ENCODE measurements at regions of chr14 and their contacts with region 1.

Region 1: GRCh38 chr14:24710403-24711112 is 76.6 kb upstream of the GZMB start:
- DNase-seq: peak; percentile 76
- ATAC-seq: peak; percentile 84
- H3K4me3 Mint-ChIP-seq: no peak overlapping the region
- H3K27ac Mint-ChIP-seq: no peak overlapping the region
- H3K4me1 Mint-ChIP-seq: peaks cover 2% of the 10 kb centered on the region
- H3K27me3 Mint-ChIP-seq: peaks cover 2% of the 10 kb centered on the region
- CTCF ChIP-seq: peak; percentile 80

Region 2: DNA sequence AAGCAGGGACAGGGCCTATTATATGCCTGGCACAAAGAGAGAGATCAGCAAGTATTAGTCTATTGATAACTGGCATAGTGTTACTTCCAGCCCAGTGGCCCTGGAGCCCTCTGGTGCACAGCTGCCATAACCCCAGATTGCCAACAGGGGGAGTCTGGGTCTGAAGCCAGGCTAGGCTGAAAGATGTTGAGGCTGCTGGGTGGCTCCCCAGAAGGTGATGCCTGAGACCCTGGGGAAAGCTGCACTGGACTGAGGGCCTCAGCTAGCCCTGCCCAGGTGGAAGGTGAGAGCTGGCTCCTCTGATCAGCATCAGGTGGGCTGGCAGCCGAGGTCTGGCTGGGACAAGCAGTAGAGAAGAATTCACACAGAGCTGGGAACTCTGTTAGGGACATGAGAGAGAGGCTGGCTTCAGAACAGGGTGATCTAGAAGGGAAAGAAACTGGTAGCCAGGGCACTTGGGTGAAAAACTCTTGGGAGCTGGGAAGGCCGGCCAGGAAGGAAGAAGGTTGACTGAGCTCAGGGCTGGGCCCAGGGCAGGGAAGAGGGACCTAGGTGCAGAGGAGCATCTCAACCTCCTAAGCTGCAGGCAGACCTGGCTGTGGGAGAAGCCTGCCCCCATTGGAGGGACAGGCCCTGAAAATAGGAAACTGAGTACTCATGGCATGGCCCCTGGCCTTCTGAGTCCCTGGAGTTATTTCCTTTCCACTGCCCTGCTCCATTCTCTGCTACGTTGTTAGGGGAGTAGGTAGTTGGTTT is 104.9 kb before region 1 on chr14:
- CTCF ChIA-PET with region 1: interaction called, 23 read pairs
- POLR2A ChIA-PET with region 1: interaction called, 3 read pairs
- intact Hi-C with region 1: no loop called
- DNase-seq: peak; percentile 86
- ATAC-seq: peak; percentile 85
- H3K4me3 Mint-ChIP-seq: peak overlapping the region; percentile 72
- H3K27ac Mint-ChIP-seq: peak overlapping the region; percentile 87
- H3K4me1 Mint-ChIP-seq: peaks cover 55% of the 10 kb centered on the region
- H3K27me3 Mint-ChIP-seq: no peaks in the 10 kb centered on the region
- CTCF ChIP-seq: peak; percentile 98

Region 3: DNA sequence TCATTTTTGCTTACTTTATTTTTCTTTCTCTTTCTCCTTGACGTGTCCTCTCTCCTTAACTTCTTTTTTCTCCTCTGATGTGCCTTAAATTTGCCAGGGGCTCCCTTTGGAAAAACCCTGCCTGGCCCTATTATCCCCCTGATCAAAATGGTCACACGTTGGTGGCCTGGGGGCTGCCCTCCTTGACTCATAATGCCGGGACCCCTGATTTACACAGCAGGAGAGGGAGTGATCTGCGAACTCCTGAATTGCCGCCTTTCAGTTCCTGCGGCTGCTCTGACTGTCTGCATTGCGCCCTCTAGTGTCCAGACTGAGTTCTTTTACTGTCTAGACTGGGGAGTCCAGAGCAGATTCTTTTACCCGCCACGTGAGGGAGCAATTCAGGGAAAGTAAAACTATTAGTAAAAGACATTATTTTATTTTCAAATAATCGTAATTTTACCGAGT is 31.7 kb before region 1 on chr14:
- CTCF ChIA-PET with region 1: interaction called, 36 read pairs
- POLR2A ChIA-PET with region 1: interaction called, 3 read pairs
- intact Hi-C with region 1: no loop called
- DNase-seq: peak; percentile 85
- ATAC-seq: peak; percentile 42
- H3K4me3 Mint-ChIP-seq: peak overlapping the region; percentile 81
- H3K27ac Mint-ChIP-seq: peak overlapping the region; percentile 96
- H3K4me1 Mint-ChIP-seq: peaks cover 64% of the 10 kb centered on the region
- H3K27me3 Mint-ChIP-seq: no peaks in the 10 kb centered on the region
- CTCF ChIP-seq: peak; percentile 99

Region 4: GRCh38 chr14:24699052-24699451 is 11.5 kb before region 1 on chr14:
- CTCF ChIA-PET with region 1: interaction called, 28 read pairs
- POLR2A ChIA-PET with region 1: interaction called, 5 read pairs
- intact Hi-C with region 1: no loop called
- DNase-seq: no peak
- ATAC-seq: no peak
- H3K4me3 Mint-ChIP-seq: no peak overlapping the region
- H3K27ac Mint-ChIP-seq: peak overlapping the region; percentile 0
- H3K4me1 Mint-ChIP-seq: peaks cover 9% of the 10 kb centered on the region
- H3K27me3 Mint-ChIP-seq: no peaks in the 10 kb centered on the region
- CTCF ChIP-seq: no peak

Region 5: GRCh38 chr14:24734878-24735500 is 24.4 kb after region 1 on chr14:
- CTCF ChIA-PET with region 1: interaction called, 37 read pairs
- POLR2A ChIA-PET with region 1: no interaction called
- intact Hi-C with region 1: no loop called
- DNase-seq: peak; percentile 54
- ATAC-seq: peak; percentile 49
- H3K4me3 Mint-ChIP-seq: no peak overlapping the region
- H3K27ac Mint-ChIP-seq: no peak overlapping the region
- H3K4me1 Mint-ChIP-seq: no peaks in the 10 kb centered on the region
- H3K27me3 Mint-ChIP-seq: peaks cover 6% of the 10 kb centered on the region
- CTCF ChIP-seq: peak; percentile 87

Region 6: DNA sequence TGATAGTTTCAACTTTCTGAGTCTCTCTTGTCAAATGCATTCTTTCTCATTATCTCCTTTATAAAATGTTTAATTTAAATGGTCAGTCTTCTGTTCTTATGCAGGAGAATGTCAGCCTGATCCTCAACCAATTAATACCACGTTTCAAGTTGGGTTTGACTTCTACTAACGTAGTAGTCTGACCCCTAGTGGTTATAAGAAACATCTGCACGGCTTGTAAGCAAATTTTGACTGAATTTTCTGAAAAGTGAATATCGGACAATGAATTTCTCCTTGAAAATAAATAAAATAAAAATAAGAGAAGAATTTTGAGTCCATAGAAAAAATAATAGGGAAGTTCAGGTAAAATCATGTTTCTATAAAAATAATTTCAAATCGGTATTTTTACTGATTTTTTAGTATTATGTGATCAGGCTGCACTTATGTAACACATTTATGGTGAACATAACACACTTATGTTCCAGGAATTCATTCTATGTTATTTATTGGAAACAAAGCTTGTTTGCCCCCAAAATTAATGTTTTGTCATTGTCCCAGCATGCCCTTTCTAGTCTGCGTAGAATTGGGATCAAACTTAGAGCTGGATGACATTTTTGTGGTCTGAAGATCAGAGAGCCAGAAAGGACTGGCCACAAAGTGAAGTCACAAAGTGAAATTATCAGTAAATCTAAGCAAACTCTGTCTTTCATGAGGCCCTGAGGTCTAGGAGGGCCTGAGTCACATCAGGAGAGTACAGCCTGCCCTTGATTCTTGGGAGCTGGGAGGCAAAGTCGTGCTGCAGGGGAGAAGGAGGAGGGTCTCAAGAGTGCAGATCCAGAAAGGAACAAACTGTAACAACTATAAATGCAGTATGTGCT is 440.6 kb after region 1 on chr14:
- CTCF ChIA-PET with region 1: interaction called, 8 read pairs
- POLR2A ChIA-PET with region 1: no interaction called
- intact Hi-C with region 1: loop called (anchors 5 kb)
- DNase-seq: no peak
- ATAC-seq: no peak
- H3K4me3 Mint-ChIP-seq: no peak overlapping the region
- H3K27ac Mint-ChIP-seq: no peak overlapping the region
- H3K4me1 Mint-ChIP-seq: no peaks in the 10 kb centered on the region
- H3K27me3 Mint-ChIP-seq: peaks cover 5% of the 10 kb centered on the region
- CTCF ChIP-seq: peak; percentile 80